ENCODE measurements at regions of chr10 and their contacts with region 1.

Region 1: DNA sequence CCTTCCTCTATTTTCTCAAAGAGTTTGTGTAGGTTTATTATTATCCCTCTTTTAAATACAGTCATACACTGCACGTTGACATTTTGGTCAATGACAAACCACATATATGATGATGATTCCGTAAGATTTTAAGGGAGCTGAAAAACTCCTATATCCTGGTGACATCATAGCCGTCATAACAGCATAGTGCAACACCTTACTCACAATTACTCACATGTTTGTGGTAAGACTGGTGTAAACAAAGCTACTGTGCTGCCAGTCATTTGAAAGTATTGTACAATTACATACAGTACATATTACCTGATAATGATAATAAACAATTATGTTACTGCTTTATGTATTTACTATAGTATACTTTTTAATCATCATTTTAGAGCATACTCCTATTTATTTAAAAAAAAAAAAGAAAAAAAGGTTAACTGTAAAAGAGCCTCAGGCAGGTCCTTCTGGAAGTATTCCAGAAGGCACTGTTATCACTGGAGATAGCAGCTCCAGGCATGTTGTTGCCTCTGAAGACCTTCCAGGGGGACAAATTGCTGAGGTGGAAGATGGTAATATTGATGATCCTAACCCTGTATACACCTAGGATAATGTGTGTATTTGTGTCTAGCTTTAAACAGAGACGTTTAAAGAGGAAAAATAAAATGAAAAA is 123.3 kb upstream of the CDK1 start:
- DNase-seq: no peak
- H3K4me3 Mint-ChIP-seq: no peak overlapping the region
- H3K27ac Mint-ChIP-seq: no peak overlapping the region
- H3K4me1 Mint-ChIP-seq: peaks cover 5% of the 10 kb centered on the region
- H3K27me3 Mint-ChIP-seq: no peaks in the 10 kb centered on the region
- CTCF ChIP-seq: no peak

Region 2: GRCh38 chr10:60733189-60733822 is 78.4 kb after region 1 on chr10:
- CTCF ChIA-PET with region 1: no interaction called
- intact Hi-C with region 1: loop called (anchors 2 kb)
- DNase-seq: peak; percentile 89
- H3K4me3 Mint-ChIP-seq: peak overlapping the region; percentile 80
- H3K27ac Mint-ChIP-seq: no peak overlapping the region
- H3K4me1 Mint-ChIP-seq: peaks cover 19% of the 10 kb centered on the region
- H3K27me3 Mint-ChIP-seq: no peaks in the 10 kb centered on the region
- CTCF ChIP-seq: peak; percentile 87